ENCODE measurements at regions of chr1 and their contacts with region 1.

Region 1: GRCh38 chr1:212062832-212063438 is 27.4 kb downstream of the DTL start:
- DNase-seq: no peak

Region 2: GRCh38 chr1:211985556-211986264 is 77.2 kb before region 1 on chr1:
- intact Hi-C with region 1: no loop called
- DNase-seq: no peak

Region 3: GRCh38 chr1:212101735-212102134 is 38.8 kb after region 1 on chr1:
- intact Hi-C with region 1: loop called in 1 of 2 experiments (anchors 2 kb)
- DNase-seq: no peak

Region 4: DNA sequence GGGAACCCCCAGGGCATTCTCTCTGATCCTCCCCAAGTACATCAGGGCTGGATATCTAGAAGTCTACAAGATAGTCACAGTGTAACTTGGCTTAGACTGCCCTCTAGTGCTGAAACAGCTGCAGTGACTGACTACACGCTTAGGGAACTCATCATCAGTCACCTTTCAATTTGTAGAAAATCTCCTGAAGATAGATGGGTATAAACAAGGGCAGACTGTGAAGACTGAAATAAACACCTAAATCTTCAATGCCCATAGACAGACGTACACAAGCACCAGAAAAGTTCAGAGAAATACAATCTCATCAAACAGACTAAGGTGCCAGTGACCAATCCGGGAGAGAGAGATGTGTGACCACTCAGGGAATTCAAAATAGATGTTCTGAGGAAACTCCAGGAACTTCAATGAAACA is 305.1 kb after region 1 on chr1:
- intact Hi-C with region 1: loop called in 1 of 2 experiments (anchors 5 kb)
- DNase-seq: no peak

Region 5: GRCh38 chr1:212455803-212456528 is 393.0 kb after region 1 on chr1:
- intact Hi-C with region 1: loop called in 1 of 2 experiments (anchors 5 kb)
- DNase-seq: peak; percentile 96